Mammary epithelial cell (primary cell): ENCODE measurements at regions of chr5 and their contacts with region 1.

Region 1: GRCh38 chr5:57137401-57137800 is 36.5 kb upstream of the GPBP1 start:
- DNase-seq: peak; percentile 58
- H3K4me3 ChIP-seq: no peak overlapping the region
- H3K27ac ChIP-seq: no peak overlapping the region
- H3K4me1 ChIP-seq: no peaks in the 10 kb centered on the region
- H3K27me3 ChIP-seq: no peaks in the 10 kb centered on the region
- CTCF ChIP-seq: no peak

Region 2: DNA sequence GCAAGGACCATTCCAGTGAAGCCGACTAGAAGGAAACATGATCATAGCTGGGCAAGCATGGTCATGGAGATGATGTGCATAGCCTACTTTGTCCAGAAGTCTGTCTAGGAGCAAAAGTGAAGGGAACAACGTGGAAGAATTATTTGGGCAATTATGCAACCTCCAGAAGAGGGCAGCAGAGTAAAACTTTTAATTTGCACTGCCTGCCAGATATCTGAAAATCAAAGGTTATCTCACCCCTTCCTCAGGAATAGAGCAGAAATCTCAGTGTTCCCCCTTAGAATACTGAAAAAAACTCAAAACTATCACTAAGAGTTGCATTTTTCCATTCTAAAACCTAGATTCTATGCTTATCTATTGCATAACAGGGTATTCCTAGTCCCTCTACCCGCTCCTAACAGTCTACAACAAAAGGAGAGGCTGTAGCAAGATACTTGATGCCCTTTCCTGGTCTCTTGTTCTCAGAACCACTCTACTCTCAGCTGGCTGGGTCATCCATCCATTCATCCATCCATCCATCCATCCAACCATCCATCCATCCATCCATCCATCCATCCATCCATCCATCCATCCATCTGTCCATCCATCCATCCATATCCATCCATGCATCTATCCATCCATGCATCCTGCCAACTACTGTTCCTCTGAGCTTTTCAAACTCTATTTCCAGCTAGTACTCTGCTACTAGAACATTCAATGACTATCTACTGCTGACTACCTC is 236.4 kb before region 1 on chr5:
- CTCF ChIA-PET with region 1: no interaction called
- dilution Hi-C with region 1: no loop called
- in situ Hi-C with region 1: loop called (anchors 5 to 10 kb)
- intact Hi-C with region 1: loop called (anchors 1 kb)
- DNase-seq: peak; percentile 39
- H3K4me3 ChIP-seq: no peak overlapping the region
- H3K27ac ChIP-seq: no peak overlapping the region
- H3K4me1 ChIP-seq: peaks cover 8% of the 10 kb centered on the region
- H3K27me3 ChIP-seq: no peaks in the 10 kb centered on the region
- CTCF ChIP-seq: peak; percentile 62 to 79

Region 3: DNA sequence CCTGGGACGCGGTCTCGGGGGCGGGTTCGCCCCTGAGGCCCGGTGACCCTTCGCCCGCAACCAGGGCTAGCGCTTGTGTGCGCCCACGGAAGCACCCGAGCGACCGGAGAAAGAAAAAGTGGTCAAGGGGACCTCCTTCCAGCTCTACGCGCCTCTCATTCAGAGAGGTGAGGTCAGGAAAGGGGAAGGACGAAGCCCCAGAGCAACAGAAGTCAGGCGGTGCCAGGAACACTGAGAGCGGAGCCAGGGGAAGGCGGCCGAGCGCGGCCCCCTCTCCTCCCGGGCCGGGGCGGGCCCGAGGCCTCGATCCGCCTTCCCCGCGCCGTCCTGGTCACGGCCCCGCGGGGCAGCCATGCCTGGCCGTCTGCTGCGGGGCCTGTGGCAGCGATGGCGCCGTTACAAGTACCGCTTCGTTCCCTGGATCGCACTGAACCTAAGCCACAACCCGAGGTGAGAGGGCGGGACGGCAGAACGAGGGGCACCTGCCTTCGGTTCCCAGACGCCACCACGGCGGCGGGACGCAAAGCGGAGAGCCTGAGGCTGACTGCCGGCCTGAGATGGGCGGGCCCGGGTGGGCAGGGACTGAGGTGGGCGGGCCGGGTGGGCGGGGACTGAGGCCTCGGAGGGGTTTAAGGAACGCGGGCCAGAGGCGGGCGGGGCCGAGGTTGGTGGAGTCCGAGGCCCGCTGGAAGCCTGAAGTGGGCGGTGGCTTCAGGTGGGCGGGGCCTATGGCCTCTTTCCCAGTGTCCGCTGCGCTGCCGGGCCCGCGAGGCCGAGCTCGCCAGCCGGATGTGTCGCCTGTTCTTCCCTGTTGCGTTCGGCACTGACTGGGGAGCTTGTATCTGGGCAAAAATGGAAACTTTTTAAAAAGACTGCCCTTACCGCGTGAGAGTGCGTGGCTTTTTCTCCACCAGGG is 227.8 kb before region 1 on chr5 and contains the start of gene SETD9:
- CTCF ChIA-PET with region 1: no interaction called
- dilution Hi-C with region 1: no loop called
- in situ Hi-C with region 1: loop called (anchors 5 to 10 kb)
- intact Hi-C with region 1: no loop called
- DNase-seq: peak; percentile 95
- H3K4me3 ChIP-seq: peak within 1 kb of the TSS; percentile 69 to 97 (median 79)
- H3K27ac ChIP-seq: peak within 1 kb of the TSS; percentile 92
- H3K4me1 ChIP-seq: peaks cover 5% of the 10 kb centered on the region
- H3K27me3 ChIP-seq: no peaks in the 10 kb centered on the region
- CTCF ChIP-seq: no peak
- total RNA-seq, gene SETD9: 10.5 to 10.7 TPM

Region 4: GRCh38 chr5:56951946-56952691 is 185.3 kb before region 1 on chr5 and contains the start of gene MIER3:
- CTCF ChIA-PET with region 1: interaction called, 3 read pairs
- dilution Hi-C with region 1: no loop called
- in situ Hi-C with region 1: no loop called
- intact Hi-C with region 1: loop called (anchors 1 kb)
- DNase-seq: peak; percentile 68
- H3K4me3 ChIP-seq: peak within 1 kb of the TSS; percentile 79 to 92 (median 80)
- H3K27ac ChIP-seq: peak within 1 kb of the TSS; percentile 36
- H3K4me1 ChIP-seq: peaks cover 14% of the 10 kb centered on the region
- H3K27me3 ChIP-seq: no peaks in the 10 kb centered on the region
- CTCF ChIP-seq: no peak
- total RNA-seq, gene MIER3: 17.6 to 18.7 TPM

Region 5: GRCh38 chr5:57102905-57103255 is 34.5 kb before region 1 on chr5:
- CTCF ChIA-PET with region 1: no interaction called
- dilution Hi-C with region 1: no loop called
- in situ Hi-C with region 1: no loop called
- intact Hi-C with region 1: no loop called
- DNase-seq: no peak
- H3K4me3 ChIP-seq: no peak overlapping the region
- H3K27ac ChIP-seq: no peak overlapping the region
- H3K4me1 ChIP-seq: no peaks in the 10 kb centered on the region
- H3K27me3 ChIP-seq: no peaks in the 10 kb centered on the region
- CTCF ChIP-seq: no peak

Region 6: GRCh38 chr5:57173185-57174127 is 36.1 kb after region 1 on chr5 and contains the start of gene GPBP1:
- CTCF ChIA-PET with region 1: no interaction called
- dilution Hi-C with region 1: no loop called
- in situ Hi-C with region 1: no loop called
- intact Hi-C with region 1: loop called (anchors 1 kb)
- DNase-seq: peak; percentile 99
- H3K4me3 ChIP-seq: peak within 1 kb of the TSS; percentile 94 to 98 (median 96)
- H3K27ac ChIP-seq: peak within 1 kb of the TSS; percentile 99
- H3K4me1 ChIP-seq: peaks cover 23% of the 10 kb centered on the region
- H3K27me3 ChIP-seq: no peaks in the 10 kb centered on the region
- CTCF ChIP-seq: no peak
- total RNA-seq, gene GPBP1: 39.7 to 55.6 TPM

Region 7: GRCh38 chr5:57259704-57260103 is 122.3 kb after region 1 on chr5:
- CTCF ChIA-PET with region 1: interaction called, 16 read pairs
- dilution Hi-C with region 1: no loop called
- in situ Hi-C with region 1: no loop called
- intact Hi-C with region 1: no loop called
- DNase-seq: no peak
- H3K4me3 ChIP-seq: no peak overlapping the region
- H3K27ac ChIP-seq: no peak overlapping the region
- H3K4me1 ChIP-seq: no peaks in the 10 kb centered on the region
- H3K27me3 ChIP-seq: no peaks in the 10 kb centered on the region
- CTCF ChIP-seq: no peak